Ovary (tissue), 10 donors: ENCODE measurements at regions of chr1 and their contacts with region 1.

Region 1: GRCh38 chr1:226964068-226964425 is 24.0 kb downstream of the COQ8A start:
- DNase-seq: no peak
- H3K4me3 ChIP-seq: no peak overlapping the region
- H3K27ac ChIP-seq: no peak overlapping the region
- H3K4me1 ChIP-seq: peaks cover 2% of the 10 kb centered on the region
- H3K27me3 ChIP-seq: no peaks in the 10 kb centered on the region
- CTCF ChIP-seq: no peak
- EP300 ChIP-seq: no peak
- POLR2A ChIP-seq: no peak

Region 2: GRCh38 chr1:227006226-227006796 is 42.3 kb after region 1 on chr1:
- intact Hi-C with region 1: no loop called
- DNase-seq: no peak
- H3K4me3 ChIP-seq: no peak overlapping the region
- H3K27ac ChIP-seq: no peak overlapping the region
- H3K4me1 ChIP-seq: no peaks in the 10 kb centered on the region
- H3K27me3 ChIP-seq: no peaks in the 10 kb centered on the region
- CTCF ChIP-seq: no peak
- EP300 ChIP-seq: no peak
- POLR2A ChIP-seq: no peak

Region 3: GRCh38 chr1:227563324-227564201 is 599.5 kb after region 1 on chr1 and contains the start of gene ZNF678:
- intact Hi-C with region 1: loop called in 1 of 4 experiments (anchors 5 kb)
- DNase-seq: peak; percentile 83 to 91 (median 90)
- H3K4me3 ChIP-seq: peak within 1 kb of the TSS; percentile 54
- H3K27ac ChIP-seq: peak within 1 kb of the TSS; percentile 37 to 49
- H3K4me1 ChIP-seq: peaks cover 3% of the 10 kb centered on the region
- H3K27me3 ChIP-seq: no peaks in the 10 kb centered on the region
- CTCF ChIP-seq: no peak
- EP300 ChIP-seq: peak; percentile 53
- POLR2A ChIP-seq: peak; percentile 14
- total RNA-seq, gene ZNF678: 7.0 to 12.0 (median 8.8) TPM